Heart right ventricle (tissue), 16 donors: ENCODE measurements at regions of chr17 and their contacts with region 1.

Region 1: GRCh38 chr17:42027961-42028790 is 8.3 kb downstream of the NKIRAS2 start:
- DNase-seq: no peak
- ATAC-seq: no peak
- H3K4me3 ChIP-seq: no peak overlapping the region
- H3K27ac ChIP-seq: no peak overlapping the region
- H3K4me1 ChIP-seq: peaks cover 9 to 27% (median 17%) of the 10 kb centered on the region in 9 donors
- H3K27me3 ChIP-seq: peaks cover 0 to 13% (median 0%) of the 10 kb centered on the region in 7 donors
- CTCF ChIP-seq: peak in 1 of 9 donors; percentile 27

Region 2: GRCh38 chr17:41835214-41835799 is 192.9 kb before region 1 on chr17:
- intact Hi-C with region 1: no loop called
- DNase-seq: no peak
- ATAC-seq: peak; percentile 13 to 66 (median 41)
- H3K4me3 ChIP-seq: peak overlapping the region; percentile 70 to 100 (median 90)
- H3K27ac ChIP-seq: peak overlapping the region in 9 of 10 donors; percentile 60 to 84 (median 75)
- H3K4me1 ChIP-seq: peaks cover 0 to 20% (median 14%) of the 10 kb centered on the region in 9 donors
- H3K27me3 ChIP-seq: no peaks in the 10 kb centered on the region
- CTCF ChIP-seq: no peak

Region 3: GRCh38 chr17:42050393-42051012 is 22.3 kb after region 1 on chr17 and contains the start of gene C17orf113:
- intact Hi-C with region 1: loop called in 1 of 10 experiments (anchors 1 kb)
- DNase-seq: peak; percentile 50 to 59
- ATAC-seq: peak; percentile 65 to 90 (median 79)
- H3K4me3 ChIP-seq: peak within 1 kb of the TSS; percentile 48 to 97 (median 75)
- H3K27ac ChIP-seq: peak within 1 kb of the TSS in 5 of 10 donors; percentile 32 to 71 (median 41)
- H3K4me1 ChIP-seq: peaks cover 0 to 13% (median 7%) of the 10 kb centered on the region in 9 donors
- H3K27me3 ChIP-seq: peaks cover 4 to 34% (median 28%) of the 10 kb centered on the region in 7 donors
- CTCF ChIP-seq: peak in 8 of 9 donors; percentile 11 to 57 (median 44)
- total RNA-seq, gene C17orf113: 0.46 to 1.2 (median 0.88) TPM

Region 4: DNA sequence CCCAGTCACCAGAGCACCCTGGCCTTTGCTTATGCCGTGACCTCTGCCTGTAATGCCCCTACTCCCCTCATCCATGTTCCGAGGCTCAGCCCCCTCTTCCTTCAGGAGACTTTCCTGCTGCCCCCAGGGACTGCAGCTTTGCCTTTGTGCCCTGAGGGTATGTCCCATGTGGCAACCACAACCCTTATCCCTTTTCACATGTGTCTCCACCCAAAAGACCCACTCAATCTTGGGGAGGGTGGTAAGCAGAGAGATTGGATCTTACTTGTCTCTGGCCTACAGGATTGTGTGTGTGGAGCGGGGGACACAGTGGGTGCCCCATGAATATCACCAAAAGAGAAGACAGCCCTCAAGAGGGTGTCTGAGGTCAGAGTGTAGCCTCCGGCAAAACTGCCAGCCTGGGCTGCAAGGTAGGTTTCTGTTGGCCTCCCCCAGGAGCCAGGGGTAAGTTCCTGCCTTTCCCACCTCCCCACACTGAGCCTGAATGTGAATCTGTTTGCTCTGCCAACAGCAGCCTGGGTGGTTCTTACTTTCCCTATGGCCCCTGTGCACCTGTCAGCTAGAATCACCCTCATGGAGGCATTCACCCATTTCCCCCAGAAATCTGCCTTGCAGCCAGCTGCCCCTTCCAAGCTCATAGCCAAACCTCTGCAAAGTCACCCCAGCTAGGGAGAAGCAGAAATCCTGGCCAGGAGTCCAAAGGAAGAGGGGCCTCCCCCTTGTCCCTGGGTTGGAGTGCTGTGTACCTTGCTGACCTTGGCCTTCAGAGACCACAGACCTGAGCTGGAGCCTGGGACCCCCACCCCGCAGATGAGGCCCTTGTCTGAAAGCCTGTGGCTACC is 33.7 kb after region 1 on chr17:
- intact Hi-C with region 1: loop called in 3 of 10 experiments (anchors 1 to 5 kb)
- DNase-seq: no peak
- ATAC-seq: no peak
- H3K4me3 ChIP-seq: no peak overlapping the region
- H3K27ac ChIP-seq: no peak overlapping the region
- H3K4me1 ChIP-seq: peaks cover 0 to 9% (median 3%) of the 10 kb centered on the region in 9 donors
- H3K27me3 ChIP-seq: peaks cover 0 to 7% (median 0%) of the 10 kb centered on the region in 7 donors
- CTCF ChIP-seq: no peak

Region 5: DNA sequence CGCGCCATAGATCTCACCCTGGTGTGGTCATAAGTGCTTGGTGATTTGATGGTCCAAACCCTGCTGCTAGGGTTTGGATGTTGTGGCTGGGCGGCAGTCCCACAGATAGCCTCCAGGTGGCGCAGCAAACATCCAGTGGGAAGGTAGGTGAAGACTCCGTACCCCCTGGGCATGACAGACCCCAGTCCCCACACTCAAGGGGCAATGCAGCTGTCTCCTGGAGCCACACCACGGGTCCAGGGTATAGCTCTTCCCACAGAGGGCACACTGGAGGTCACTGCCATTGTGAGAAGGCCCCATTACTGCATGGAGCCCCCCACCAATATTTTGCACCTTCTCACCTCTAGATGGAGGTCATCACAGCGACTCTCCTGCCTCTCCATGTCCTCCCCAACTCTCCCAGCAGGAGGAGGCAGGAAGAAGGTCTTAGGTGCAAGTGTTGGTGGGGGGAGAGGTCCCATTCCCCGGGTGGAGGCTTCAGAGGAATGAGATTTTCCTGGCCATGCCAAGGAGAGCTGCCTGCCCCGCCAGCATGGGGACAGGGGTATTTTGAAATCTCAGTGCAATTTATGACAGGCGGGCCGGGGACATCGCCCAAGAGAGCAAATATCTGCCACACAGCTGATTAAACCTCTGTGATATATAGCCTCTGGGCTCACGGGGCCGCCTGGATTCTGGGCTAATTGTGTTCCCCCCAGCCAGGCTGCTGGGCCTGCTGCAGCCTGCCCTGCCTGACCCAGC is 39.3 kb after region 1 on chr17:
- intact Hi-C with region 1: loop called in 3 of 10 experiments (anchors 1 to 5 kb)
- DNase-seq: peak; percentile 48 to 67
- ATAC-seq: peak in 4 of 8 donors; percentile 40 to 53 (median 42)
- H3K4me3 ChIP-seq: no peak overlapping the region
- H3K27ac ChIP-seq: no peak overlapping the region
- H3K4me1 ChIP-seq: peaks cover 0 to 17% (median 6%) of the 10 kb centered on the region in 9 donors
- H3K27me3 ChIP-seq: peaks cover 0 to 21% (median 17%) of the 10 kb centered on the region in 7 donors
- CTCF ChIP-seq: peak; percentile 78 to 96 (median 88)

Region 6: DNA sequence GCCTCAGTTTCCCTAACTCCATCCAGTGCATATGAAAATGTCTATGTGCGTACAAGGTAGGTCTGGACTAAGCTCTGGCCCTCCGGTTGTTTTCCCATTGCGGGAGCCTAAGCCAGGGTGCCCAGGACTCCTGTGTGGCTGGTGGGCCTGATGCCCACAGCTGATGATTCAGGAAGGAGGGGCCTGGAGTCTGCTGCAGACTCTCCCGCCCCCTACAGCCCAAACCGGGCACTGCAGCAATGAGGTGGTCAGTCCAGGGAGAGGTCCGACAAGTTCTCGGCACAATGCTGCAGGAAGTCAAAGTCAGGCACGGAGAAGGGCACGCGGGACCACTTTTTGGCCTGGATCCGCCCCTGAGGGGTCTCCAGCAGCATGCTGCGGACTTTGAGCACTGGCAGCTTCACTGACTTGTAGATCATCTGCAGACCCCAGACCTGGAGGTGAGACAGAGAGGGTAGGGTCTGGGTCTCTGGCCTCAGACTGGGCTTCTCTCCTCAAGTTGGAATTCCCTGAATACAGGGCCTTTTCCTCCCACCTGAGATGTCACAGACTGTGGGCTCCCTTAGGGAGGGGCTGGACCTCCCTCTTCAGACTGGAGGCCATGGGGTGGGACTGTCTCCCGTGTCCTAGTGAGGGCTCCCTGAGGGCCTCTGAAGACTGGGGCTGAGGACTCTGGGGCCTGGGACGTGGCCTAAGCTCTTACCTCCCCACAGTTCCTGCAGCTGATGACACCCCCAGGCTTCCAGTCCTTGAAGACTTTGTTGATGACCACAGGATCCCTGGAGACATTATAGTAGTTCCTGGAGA is 73.5 kb after region 1 on chr17:
- intact Hi-C with region 1: loop called in 6 of 10 experiments (anchors 2 to 5 kb)
- DNase-seq: peak; percentile 71 to 85
- ATAC-seq: peak; percentile 63 to 87 (median 82)
- H3K4me3 ChIP-seq: no peak overlapping the region
- H3K27ac ChIP-seq: no peak overlapping the region
- H3K4me1 ChIP-seq: peaks cover 0 to 17% (median 10%) of the 10 kb centered on the region in 9 donors
- H3K27me3 ChIP-seq: peaks cover 2 to 21% (median 19%) of the 10 kb centered on the region in 7 donors
- CTCF ChIP-seq: peak; percentile 69 to 89 (median 83)

Region 7: DNA sequence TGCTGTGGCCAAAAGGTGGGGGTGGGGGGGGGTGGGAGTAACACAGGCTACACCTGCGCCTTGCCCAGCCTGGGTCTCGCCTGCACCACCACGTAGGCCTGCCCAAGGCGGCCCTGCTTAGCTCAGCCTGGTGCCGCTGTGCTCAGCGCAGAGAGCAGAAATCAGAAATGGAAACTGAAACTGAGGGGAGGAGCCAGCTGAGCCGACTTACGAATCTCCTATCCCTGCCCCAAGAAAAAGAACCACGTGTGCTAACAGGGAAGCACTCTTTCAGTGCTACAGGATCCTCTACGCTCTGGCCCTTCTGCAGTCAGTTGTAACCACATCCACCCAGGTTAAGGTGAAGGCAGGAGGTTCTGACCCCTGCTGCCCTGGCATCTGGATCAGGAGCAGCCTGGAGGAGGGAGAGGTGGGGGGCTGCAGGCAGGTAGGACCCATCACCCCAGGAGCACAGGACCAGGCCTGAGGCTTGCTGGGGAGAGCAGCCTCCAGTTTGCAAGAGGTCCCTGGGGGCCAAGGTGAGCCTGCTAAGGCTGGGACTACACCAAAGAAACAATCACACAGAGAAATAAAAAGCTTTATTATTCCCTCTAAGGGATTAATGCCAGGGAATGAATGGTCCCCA is 84.5 kb after region 1 on chr17 and contains the start of gene DHX58:
- intact Hi-C with region 1: loop called in 9 of 10 experiments (anchors 1 to 5 kb)
- DNase-seq: peak; percentile 56 to 82
- ATAC-seq: peak; percentile 65 to 93 (median 85)
- H3K4me3 ChIP-seq: peak within 1 kb of the TSS; percentile 16 to 69 (median 62)
- H3K27ac ChIP-seq: peak within 1 kb of the TSS; percentile 69 to 93 (median 90)
- H3K4me1 ChIP-seq: peaks cover 7 to 37% (median 17%) of the 10 kb centered on the region in 9 donors
- H3K27me3 ChIP-seq: no peaks in the 10 kb centered on the region
- CTCF ChIP-seq: peak in 1 of 9 donors; percentile 9
- total RNA-seq, gene DHX58: 2.2 to 8.4 (median 4.0) TPM